ENCODE measurements at regions of chr1 and their contacts with region 1.

Region 1: DNA sequence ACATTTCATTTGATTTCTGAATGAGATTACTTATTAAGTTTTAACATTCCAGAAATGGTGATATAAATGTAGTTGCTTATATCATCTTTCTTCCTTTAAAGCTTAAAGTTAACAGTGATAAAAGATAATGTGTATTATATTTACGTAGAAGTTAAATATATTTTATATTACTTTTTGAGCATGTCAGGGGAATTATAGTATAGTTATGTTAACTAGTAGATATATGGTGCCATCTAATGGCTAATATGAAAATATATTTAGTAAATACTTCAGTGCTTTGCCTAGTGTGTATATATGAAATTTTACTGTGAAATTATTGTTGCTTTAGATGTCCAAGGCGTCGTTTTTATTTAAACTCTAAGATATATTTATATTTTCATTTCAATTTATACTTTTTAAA is 51.5 kb downstream of the SYT14 start:
- DNase-seq: peak; percentile 49
- H3K4me3 ChIP-seq: no peak overlapping the region
- CTCF ChIP-seq: no peak

Region 2: DNA sequence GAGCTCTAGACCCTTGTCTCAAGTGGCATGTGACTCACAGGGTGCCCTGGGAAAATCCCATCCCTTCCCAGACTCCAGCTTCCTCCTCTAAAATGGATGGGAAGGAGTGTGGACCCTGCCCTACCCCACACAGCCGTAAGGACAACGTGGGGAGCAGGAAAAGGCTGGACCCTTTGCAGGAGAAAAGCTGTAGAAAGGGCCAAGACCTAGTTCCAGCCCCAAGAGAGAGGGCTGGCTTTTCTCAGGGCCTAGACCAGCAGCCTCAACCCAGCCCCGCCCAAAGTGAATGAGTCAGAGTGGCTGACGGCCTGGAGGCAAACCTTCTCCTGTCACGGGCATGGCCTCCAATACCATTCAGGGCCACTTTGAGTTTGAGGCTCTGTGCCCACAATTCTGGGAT is 338.4 kb before region 1 on chr1:
- in situ Hi-C with region 1: no loop called
- DNase-seq: peak; percentile 76
- H3K4me3 ChIP-seq: no peak overlapping the region
- CTCF ChIP-seq: no peak

Region 3: GRCh38 chr1:209797978-209798639 is 191.4 kb before region 1 on chr1:
- in situ Hi-C with region 1: no loop called
- DNase-seq: no peak
- H3K4me3 ChIP-seq: no peak overlapping the region
- CTCF ChIP-seq: no peak

Region 4: GRCh38 chr1:209860293-209860881 is 129.1 kb before region 1 on chr1:
- in situ Hi-C with region 1: loop called (anchors 25 kb)
- DNase-seq: peak; percentile 89
- H3K4me3 ChIP-seq: no peak overlapping the region
- CTCF ChIP-seq: peak; percentile 88

Measured in astrocyte of the spinal cord (primary cell).